ENCODE measurements at regions of chr6 and their contacts with region 1.

Region 1: DNA sequence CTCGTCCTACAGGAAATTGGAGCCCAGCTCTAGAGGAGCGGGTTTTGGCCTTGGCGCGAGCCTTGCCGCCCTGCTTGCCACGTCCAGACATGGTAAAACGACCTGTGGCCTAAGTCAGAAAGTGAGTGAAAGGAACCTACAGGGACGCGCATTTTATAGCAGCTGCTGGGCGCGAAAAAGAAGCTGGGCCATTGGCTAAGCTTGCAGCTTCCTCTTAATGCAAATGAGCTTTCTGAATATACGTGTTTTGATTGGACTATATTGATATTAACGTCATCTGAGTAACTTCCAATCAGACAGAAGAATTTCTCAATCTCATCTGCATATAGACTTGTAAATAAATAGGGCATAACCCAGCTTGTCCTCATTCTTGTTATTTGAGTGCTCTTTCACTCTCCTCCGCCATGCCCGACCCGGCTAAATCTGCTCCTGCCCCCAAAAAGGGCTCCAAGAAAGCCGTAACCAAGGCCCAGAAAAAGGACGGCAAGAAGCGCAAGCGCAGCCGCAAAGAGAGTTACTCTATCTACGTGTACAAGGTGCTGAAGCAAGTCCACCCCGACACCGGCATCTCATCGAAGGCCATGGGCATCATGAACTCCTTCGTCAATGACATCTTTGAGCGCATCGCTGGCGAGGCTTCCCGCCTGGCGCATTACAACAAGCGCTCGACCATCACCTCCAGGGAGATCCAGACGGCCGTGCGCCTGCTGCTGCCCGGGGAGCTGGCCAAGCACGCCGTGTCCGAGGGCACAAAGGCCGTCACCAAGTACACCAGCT is 18.9 kb downstream of the OR2B2 start:
- DNase-seq: peak; percentile 93
- H3K4me3 Mint-ChIP-seq: no peak overlapping the region
- H3K27ac Mint-ChIP-seq: no peak overlapping the region
- H3K4me1 Mint-ChIP-seq: peaks cover 61% of the 10 kb centered on the region
- H3K27me3 Mint-ChIP-seq: no peaks in the 10 kb centered on the region

Region 2: GRCh38 chr6:26196846-26197648 is 1696.2 kb before region 1 on chr6:
- intact Hi-C with region 1: loop called (anchors 5 kb)
- DNase-seq: peak; percentile 84
- H3K4me3 Mint-ChIP-seq: peak overlapping the region; percentile 92
- H3K27ac Mint-ChIP-seq: peak overlapping the region; percentile 95
- H3K4me1 Mint-ChIP-seq: peaks cover 54% of the 10 kb centered on the region
- H3K27me3 Mint-ChIP-seq: no peaks in the 10 kb centered on the region

Region 3: DNA sequence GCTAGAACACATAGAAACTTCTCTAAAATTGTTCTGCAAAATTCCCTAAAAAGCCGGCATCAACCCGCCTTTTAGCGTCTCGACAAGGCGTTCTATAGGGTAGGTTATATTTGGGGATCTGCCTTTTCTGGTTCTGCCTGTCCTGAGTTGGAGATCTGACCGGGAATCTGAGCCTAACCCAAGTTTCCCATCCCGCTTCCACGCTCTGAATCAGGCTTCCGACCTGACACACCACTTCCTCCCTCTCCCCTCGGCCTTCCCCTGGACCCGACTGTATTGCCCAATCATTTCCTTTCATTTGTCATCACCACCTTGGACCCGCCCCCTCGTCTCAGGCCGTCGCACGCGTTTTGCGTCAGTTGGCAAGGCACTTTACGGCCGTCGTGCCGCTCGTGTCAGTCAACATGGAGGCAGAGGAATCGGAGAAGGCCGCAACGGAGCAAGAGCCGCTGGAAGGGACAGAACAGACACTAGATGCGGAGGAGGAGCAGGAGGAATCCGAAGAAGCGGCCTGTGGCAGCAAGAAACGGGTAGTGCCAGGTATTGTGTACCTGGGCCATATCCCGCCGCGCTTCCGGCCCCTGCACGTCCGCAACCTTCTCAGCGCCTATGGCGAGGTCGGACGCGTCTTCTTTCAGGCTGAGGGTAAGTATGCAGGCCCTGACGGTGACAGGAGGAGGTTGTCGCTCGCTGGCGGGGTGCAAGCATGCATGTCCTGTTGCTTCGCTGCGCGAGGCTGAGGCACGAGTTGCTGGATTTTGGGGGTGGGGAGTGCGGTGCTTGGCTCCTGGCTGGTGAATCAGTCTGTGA is 1296.5 kb before region 1 on chr6 and contains the start of gene ABT1:
- intact Hi-C with region 1: loop called (anchors 5 kb)
- DNase-seq: peak; percentile 97
- H3K4me3 Mint-ChIP-seq: no peak within 1 kb of the TSS
- H3K27ac Mint-ChIP-seq: no peak within 1 kb of the TSS
- H3K4me1 Mint-ChIP-seq: peaks cover 39% of the 10 kb centered on the region
- H3K27me3 Mint-ChIP-seq: peaks cover 27% of the 10 kb centered on the region
- total RNA-seq, gene ABT1: 32.6 and 32.9 TPM in 2 replicates

Region 4: DNA sequence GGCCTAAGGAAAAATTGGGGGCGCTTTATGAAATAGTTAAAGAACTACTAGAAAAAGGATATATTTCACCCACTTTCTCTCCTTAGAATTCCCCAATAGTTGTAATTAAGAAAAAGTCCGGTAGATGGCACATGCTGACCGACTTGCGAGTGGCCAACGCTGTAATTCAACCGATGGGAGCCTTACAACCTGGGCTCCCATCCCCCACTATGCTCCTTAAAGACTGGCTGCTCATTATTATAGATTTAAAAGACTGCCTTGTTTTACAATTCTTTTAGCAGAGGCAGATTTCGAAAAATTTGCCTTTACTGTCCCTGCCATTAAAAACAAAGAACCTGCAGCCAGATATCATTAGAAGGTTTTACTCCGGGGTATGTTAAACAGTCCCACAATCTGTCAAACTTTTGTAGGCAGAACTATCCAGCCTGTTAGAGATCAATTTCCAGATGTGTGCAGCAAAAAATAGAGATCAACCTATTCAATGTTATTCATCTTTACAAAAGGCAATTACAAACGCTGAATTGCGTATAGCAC is 704.3 kb before region 1 on chr6:
- intact Hi-C with region 1: loop called (anchors 1 kb)
- DNase-seq: peak; percentile 25
- H3K4me3 Mint-ChIP-seq: peak overlapping the region; percentile 93
- H3K27ac Mint-ChIP-seq: no peak overlapping the region
- H3K4me1 Mint-ChIP-seq: peaks cover 15% of the 10 kb centered on the region
- H3K27me3 Mint-ChIP-seq: peaks cover 4% of the 10 kb centered on the region

Region 5: GRCh38 chr6:27687154-27688013 is 205.9 kb before region 1 on chr6:
- intact Hi-C with region 1: loop called (anchors 1 kb)
- DNase-seq: peak; percentile 74
- H3K4me3 Mint-ChIP-seq: peak overlapping the region; percentile 88
- H3K27ac Mint-ChIP-seq: peak overlapping the region; percentile 91
- H3K4me1 Mint-ChIP-seq: peaks cover 26% of the 10 kb centered on the region
- H3K27me3 Mint-ChIP-seq: peaks cover 24% of the 10 kb centered on the region

Region 6: GRCh38 chr6:27838058-27838944 is 54.9 kb before region 1 on chr6:
- intact Hi-C with region 1: loop called (anchors 1 kb)
- DNase-seq: peak; percentile 83
- H3K4me3 Mint-ChIP-seq: no peak overlapping the region
- H3K27ac Mint-ChIP-seq: no peak overlapping the region
- H3K4me1 Mint-ChIP-seq: peaks cover 25% of the 10 kb centered on the region
- H3K27me3 Mint-ChIP-seq: no peaks in the 10 kb centered on the region

Region 7: DNA sequence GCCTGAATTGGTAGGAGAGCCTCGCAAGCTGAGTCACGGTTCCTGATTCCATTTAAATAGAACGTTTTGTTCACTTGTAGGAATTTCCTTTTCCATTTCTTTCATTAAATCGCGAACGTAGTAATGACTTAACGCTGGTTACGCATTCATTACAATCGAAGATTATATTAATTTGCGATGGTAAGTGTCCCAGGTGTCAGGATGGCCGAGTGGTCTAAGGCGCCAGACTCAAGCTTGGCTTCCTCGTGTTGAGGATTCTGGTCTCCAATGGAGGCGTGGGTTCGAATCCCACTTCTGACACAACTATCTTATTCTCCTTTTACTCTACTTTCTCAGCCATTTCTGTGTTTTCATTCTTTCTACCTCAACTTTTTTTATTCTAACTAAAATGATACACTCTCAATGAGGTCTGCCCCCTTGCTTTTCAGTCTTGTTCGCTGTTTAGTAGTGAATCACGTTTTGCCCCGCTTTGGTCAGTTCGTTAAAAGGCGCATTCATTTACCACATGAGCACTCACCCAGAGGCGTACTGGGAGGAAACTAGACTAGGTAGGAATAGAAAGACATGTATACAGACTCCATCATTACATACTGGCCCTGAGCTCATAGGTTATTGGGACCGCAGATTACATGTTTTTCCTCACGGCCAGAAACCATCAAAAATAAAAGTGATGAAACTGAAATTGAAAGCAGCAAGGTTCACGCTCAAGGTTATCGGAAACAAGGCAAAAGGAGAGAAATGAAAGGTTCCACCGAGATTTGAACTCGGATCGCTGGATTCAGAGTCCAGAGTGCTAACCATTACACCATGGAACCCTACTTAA is 1047.8 kb after region 1 on chr6:
- intact Hi-C with region 1: loop called (anchors 2 kb)
- DNase-seq: peak; percentile 73
- H3K4me3 Mint-ChIP-seq: peak overlapping the region; percentile 95
- H3K27ac Mint-ChIP-seq: peak overlapping the region; percentile 97
- H3K4me1 Mint-ChIP-seq: peaks cover 59% of the 10 kb centered on the region
- H3K27me3 Mint-ChIP-seq: peaks cover 10% of the 10 kb centered on the region

Measured in activated T-helper 1 cell treated with anti-CD3 and anti-CD28 coated beads, Interleukin-12 subunit alpha, Interleukin-12 subunit beta, Interleukin-2, Interleukin-4 antibody, amounts not matched to agents 30 ng/mL and 10 ng/mL and 1 ng/mL, durations not matched to agents 14 hours and 24 hours and 36 hours (primary cell).